Sciatic nerve (tissue), 2 donors: ENCODE measurements at regions of chr12 and their contacts with region 1.

Region 1: DNA sequence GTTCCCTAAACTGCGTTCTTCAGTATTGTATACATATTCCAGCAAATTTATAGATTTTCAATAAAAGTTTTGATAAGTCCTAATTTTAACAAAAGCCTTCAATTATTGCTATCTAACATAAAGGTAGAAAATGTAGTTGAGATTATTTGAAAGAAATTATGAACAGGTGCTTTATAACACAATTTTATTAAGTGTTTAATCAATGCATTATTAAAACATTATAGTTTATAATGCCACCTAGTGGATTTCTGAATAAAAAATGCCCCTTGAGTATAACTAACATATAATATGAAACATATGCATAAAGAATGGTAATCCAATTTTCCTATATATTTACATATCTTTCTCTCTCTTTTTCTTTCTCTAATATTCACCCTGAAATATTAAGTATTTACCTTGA is 515.3 kb downstream of the SLC6A15 start:
- DNase-seq: no peak
- ATAC-seq: no peak

Region 2: GRCh38 chr12:82685790-82686167 is 1711.5 kb before region 1 on chr12:
- intact Hi-C with region 1: loop called (anchors 10 kb)
- DNase-seq: peak; percentile 98
- ATAC-seq: peak; percentile 91

Region 3: GRCh38 chr12:84329938-84330337 is 67.3 kb before region 1 on chr12:
- intact Hi-C with region 1: no loop called
- DNase-seq: no peak
- ATAC-seq: no peak

Region 4: GRCh38 chr12:84825163-84825562 is 427.9 kb after region 1 on chr12:
- intact Hi-C with region 1: no loop called
- DNase-seq: no peak
- ATAC-seq: no peak

Region 5: DNA sequence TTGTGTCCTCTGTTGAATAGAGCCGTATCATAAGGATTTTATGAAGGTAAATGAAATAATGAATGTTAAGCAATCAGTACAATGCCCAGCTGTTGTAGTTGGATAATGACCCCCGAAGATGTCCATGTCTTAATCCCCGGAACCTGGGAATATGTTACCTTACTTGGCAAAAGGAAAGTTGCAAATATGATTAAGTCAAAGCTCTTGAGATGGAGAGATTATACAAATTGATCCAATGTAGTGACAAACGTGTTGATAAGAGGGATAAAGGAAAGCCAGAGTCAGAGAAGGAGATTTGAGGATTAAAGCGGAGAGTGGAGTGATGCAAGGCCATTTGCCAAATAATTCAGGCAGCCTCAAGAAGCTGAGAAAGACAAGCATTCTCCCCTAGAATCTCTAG is 1878.1 kb after region 1 on chr12:
- intact Hi-C with region 1: no loop called
- DNase-seq: no peak
- ATAC-seq: no peak